Activated CD8-positive, alpha-beta T cell treated with anti-CD3 and anti-CD28 coated beads, Interleukin-2, amount 10 ng/mL, durations not matched to agents 7 days and 5 days (primary cell): ENCODE measurements at regions of chr3 and their contacts with region 1.

Region 1: DNA sequence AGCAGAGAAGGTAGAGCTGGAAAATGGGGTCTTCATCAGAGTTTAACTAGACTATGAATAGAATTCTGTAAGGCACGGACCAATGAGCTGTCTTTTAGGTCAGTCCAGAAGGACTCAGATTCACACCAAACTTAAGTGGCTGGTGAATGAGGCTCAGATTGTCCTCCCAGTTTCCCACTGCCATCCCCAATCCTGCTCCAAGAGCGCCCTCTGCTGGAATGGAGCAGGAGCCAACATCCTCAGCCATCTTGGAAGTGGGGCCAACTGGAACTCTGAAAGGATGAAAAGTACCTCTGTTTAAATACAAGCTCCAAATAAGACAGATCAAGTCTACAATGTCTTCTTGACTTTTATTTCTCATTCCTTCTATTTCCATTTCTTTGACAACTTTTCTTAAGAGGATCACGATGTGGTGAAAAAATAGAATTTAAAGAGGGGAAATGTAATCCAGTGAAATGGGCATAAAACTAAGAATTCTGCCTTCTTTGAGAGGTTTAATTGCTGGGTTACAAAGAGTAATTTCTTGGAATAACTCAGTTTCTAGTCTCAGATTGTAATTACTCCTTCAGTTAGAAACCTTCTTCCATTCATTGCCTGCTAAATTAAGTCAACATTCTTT is 217.1 kb upstream of the TPRG1 start:
- DNase-seq: peak; percentile 80
- ATAC-seq: peak; percentile 69
- H3K4me3 Mint-ChIP-seq: no peak overlapping the region
- H3K27ac Mint-ChIP-seq: no peak overlapping the region
- H3K4me1 Mint-ChIP-seq: peaks cover 16% of the 10 kb centered on the region
- H3K27me3 Mint-ChIP-seq: no peaks in the 10 kb centered on the region

Region 2: GRCh38 chr3:187974871-187975271 is 979.8 kb before region 1 on chr3:
- CTCF ChIA-PET with region 1: interaction called, 12 read pairs
- POLR2A ChIA-PET with region 1: no interaction called
- DNase-seq: no peak
- ATAC-seq: peak; percentile 67
- H3K4me3 Mint-ChIP-seq: peak overlapping the region; percentile 54
- H3K27ac Mint-ChIP-seq: peak overlapping the region; percentile 93
- H3K4me1 Mint-ChIP-seq: peaks cover 81% of the 10 kb centered on the region
- H3K27me3 Mint-ChIP-seq: no peaks in the 10 kb centered on the region

Region 3: GRCh38 chr3:188788621-188789081 is 166.0 kb before region 1 on chr3:
- CTCF ChIA-PET with region 1: interaction called, 13 read pairs
- POLR2A ChIA-PET with region 1: no interaction called
- DNase-seq: peak; percentile 77
- ATAC-seq: peak; percentile 97
- H3K4me3 Mint-ChIP-seq: no peak overlapping the region
- H3K27ac Mint-ChIP-seq: no peak overlapping the region
- H3K4me1 Mint-ChIP-seq: no peaks in the 10 kb centered on the region
- H3K27me3 Mint-ChIP-seq: no peaks in the 10 kb centered on the region

Region 4: DNA sequence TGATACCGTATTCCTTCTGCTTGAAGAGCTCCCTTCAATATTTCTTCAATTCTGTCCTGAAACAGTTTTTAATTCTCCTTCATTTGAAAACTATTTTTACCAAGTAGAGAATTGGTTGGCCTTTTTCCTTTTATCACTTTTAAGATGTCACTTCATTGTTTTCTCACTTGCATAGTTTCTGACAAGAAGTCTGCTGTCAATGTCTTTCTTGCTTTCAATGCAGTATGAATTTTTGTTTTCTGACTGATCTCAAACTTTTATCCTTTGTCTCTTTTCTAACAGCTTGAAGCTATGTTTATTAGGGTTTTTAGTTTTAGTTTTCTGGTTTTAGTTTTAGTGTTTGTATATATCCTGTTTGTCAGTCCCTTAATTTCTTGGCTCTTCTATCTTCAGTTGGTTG is 147.7 kb before region 1 on chr3:
- CTCF ChIA-PET with region 1: no interaction called
- POLR2A ChIA-PET with region 1: no interaction called
- DNase-seq: no peak
- ATAC-seq: no peak
- H3K4me3 Mint-ChIP-seq: no peak overlapping the region
- H3K27ac Mint-ChIP-seq: no peak overlapping the region
- H3K4me1 Mint-ChIP-seq: no peaks in the 10 kb centered on the region
- H3K27me3 Mint-ChIP-seq: no peaks in the 10 kb centered on the region

Region 5: GRCh38 chr3:188855675-188856074 is 99.0 kb before region 1 on chr3:
- CTCF ChIA-PET with region 1: interaction called, 11 read pairs
- POLR2A ChIA-PET with region 1: no interaction called
- DNase-seq: no peak
- ATAC-seq: no peak
- H3K4me3 Mint-ChIP-seq: no peak overlapping the region
- H3K27ac Mint-ChIP-seq: no peak overlapping the region
- H3K4me1 Mint-ChIP-seq: no peaks in the 10 kb centered on the region
- H3K27me3 Mint-ChIP-seq: no peaks in the 10 kb centered on the region

Region 6: GRCh38 chr3:188914552-188914951 is 40.1 kb before region 1 on chr3:
- CTCF ChIA-PET with region 1: interaction called, 54 read pairs
- POLR2A ChIA-PET with region 1: interaction called, 3 read pairs
- DNase-seq: no peak
- ATAC-seq: peak; percentile 51
- H3K4me3 Mint-ChIP-seq: no peak overlapping the region
- H3K27ac Mint-ChIP-seq: peak overlapping the region; percentile 76
- H3K4me1 Mint-ChIP-seq: peaks cover 41% of the 10 kb centered on the region
- H3K27me3 Mint-ChIP-seq: no peaks in the 10 kb centered on the region

Region 7: DNA sequence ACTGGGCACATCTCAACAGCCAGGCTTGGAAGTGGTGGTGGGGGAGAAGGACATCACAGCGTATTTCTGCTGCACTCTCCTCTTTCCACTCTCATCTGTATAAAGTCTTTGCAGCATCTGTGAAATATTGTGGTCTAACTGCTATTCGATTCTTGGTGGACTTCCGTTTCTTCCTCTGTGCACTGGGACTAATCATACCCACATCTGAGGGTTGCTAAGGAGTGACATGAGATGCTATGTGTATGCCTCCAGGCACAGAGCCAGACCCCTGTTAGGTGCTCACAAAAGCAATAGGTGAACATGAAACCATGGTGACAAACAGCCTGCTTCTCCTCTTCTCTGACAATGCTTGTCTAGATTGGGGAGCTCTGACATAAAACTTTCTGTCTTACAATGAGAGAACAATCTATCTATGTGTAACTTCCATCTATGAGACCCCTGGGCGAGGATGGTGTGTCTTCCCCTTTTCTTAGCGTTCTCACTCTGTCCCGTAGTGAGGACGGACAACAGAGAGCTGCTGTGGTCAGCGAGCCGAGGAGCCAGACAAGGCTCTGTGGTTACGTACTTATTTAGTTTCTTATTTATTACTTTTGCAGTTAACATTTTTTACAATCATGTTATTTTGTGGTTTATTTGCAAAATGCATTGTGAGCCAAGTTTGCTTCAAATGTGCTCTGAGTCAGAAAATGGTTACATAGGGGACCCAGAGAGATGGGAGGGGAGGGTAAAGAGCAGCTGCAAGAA is 20.3 kb after region 1 on chr3:
- CTCF ChIA-PET with region 1: interaction called, 21 read pairs
- POLR2A ChIA-PET with region 1: no interaction called
- DNase-seq: peak; percentile 55
- ATAC-seq: peak; percentile 96
- H3K4me3 Mint-ChIP-seq: no peak overlapping the region
- H3K27ac Mint-ChIP-seq: peak overlapping the region; percentile 11
- H3K4me1 Mint-ChIP-seq: peaks cover 37% of the 10 kb centered on the region
- H3K27me3 Mint-ChIP-seq: peaks cover 7% of the 10 kb centered on the region

Region 8: DNA sequence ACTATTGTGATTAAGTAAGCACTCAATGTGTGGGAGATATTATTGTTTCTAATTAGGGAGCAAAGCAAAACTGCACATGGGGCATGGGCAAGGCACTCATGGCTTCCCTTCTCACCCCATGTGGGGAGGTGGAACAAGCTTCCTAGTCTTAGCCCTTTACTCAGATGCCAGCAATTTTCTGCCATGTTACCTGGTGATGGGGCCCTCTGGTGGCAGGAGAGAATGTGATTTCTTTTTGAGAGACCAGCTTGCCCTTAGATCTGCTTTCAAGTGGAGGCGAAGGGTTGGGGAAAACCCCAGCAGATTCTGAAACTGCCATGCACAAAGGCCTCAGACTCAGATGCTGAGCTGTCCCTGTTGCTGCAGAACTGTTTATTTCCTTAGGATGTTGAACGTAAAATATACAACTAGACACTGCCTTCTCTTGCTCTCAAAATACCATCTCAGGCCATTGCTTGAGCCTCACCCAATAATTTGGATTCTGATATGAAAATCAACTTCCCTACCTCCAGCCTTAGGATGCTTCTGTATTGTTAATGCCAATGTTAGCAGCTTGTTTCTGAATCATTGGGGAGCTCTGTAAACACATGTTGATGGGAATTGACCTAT is 86.9 kb after region 1 on chr3:
- CTCF ChIA-PET with region 1: interaction called, 155 read pairs
- POLR2A ChIA-PET with region 1: interaction called, 3 read pairs
- DNase-seq: peak; percentile 83
- ATAC-seq: peak; percentile 97
- H3K4me3 Mint-ChIP-seq: no peak overlapping the region
- H3K27ac Mint-ChIP-seq: peak overlapping the region; percentile 48
- H3K4me1 Mint-ChIP-seq: peaks cover 42% of the 10 kb centered on the region
- H3K27me3 Mint-ChIP-seq: no peaks in the 10 kb centered on the region